ENCODE measurements at regions of chr14 and their contacts with region 1.

Region 1: GRCh38 chr14:100285021-100285912 is 21.0 kb downstream of the SLC25A29 start:
- DNase-seq: peak in 1 of 2 donors; percentile 46
- ATAC-seq: peak; percentile 82 to 88
- H3K4me3 ChIP-seq: peak overlapping the region; percentile 73 to 98 (median 84)
- H3K27ac ChIP-seq: peak overlapping the region; percentile 88 to 98 (median 92)
- H3K4me1 ChIP-seq: peaks cover 31 to 36% of the 10 kb centered on the region in 2 donors
- H3K27me3 ChIP-seq: no peaks in the 10 kb centered on the region
- CTCF ChIP-seq: peak; percentile 68 to 89 (median 80)
- POLR2A ChIP-seq: peak in 1 of 2 donors; percentile 37

Region 2: GRCh38 chr14:100221533-100222223 is 63.6 kb before region 1 on chr14:
- in situ Hi-C with region 1: no loop called
- intact Hi-C with region 1: no loop called
- DNase-seq: no peak
- ATAC-seq: peak in 1 of 2 donors; percentile 39
- H3K4me3 ChIP-seq: peak overlapping the region; percentile 32 to 56 (median 42)
- H3K27ac ChIP-seq: peak overlapping the region in 2 of 4 donors; percentile 8 to 44
- H3K4me1 ChIP-seq: peaks cover 0 to 4% of the 10 kb centered on the region in 2 donors
- H3K27me3 ChIP-seq: no peaks in the 10 kb centered on the region
- CTCF ChIP-seq: no peak
- POLR2A ChIP-seq: no peak

Region 3: GRCh38 chr14:100306420-100307219 is 21.4 kb after region 1 on chr14 and contains the start of gene SLC25A29:
- in situ Hi-C with region 1: no loop called
- intact Hi-C with region 1: loop called (anchors 2 kb)
- DNase-seq: peak; percentile 79 to 89
- ATAC-seq: peak; percentile 83 to 85
- H3K4me3 ChIP-seq: peak within 1 kb of the TSS; percentile 79 to 99 (median 96)
- H3K27ac ChIP-seq: peak within 1 kb of the TSS; percentile 93 to 98 (median 95)
- H3K4me1 ChIP-seq: peaks cover 10 to 27% of the 10 kb centered on the region in 2 donors
- H3K27me3 ChIP-seq: no peaks in the 10 kb centered on the region
- CTCF ChIP-seq: no peak
- POLR2A ChIP-seq: peak; percentile 89 to 94
- total RNA-seq, gene SLC25A29: 9.0 to 17.4 (median 13.4) TPM

Region 4: DNA sequence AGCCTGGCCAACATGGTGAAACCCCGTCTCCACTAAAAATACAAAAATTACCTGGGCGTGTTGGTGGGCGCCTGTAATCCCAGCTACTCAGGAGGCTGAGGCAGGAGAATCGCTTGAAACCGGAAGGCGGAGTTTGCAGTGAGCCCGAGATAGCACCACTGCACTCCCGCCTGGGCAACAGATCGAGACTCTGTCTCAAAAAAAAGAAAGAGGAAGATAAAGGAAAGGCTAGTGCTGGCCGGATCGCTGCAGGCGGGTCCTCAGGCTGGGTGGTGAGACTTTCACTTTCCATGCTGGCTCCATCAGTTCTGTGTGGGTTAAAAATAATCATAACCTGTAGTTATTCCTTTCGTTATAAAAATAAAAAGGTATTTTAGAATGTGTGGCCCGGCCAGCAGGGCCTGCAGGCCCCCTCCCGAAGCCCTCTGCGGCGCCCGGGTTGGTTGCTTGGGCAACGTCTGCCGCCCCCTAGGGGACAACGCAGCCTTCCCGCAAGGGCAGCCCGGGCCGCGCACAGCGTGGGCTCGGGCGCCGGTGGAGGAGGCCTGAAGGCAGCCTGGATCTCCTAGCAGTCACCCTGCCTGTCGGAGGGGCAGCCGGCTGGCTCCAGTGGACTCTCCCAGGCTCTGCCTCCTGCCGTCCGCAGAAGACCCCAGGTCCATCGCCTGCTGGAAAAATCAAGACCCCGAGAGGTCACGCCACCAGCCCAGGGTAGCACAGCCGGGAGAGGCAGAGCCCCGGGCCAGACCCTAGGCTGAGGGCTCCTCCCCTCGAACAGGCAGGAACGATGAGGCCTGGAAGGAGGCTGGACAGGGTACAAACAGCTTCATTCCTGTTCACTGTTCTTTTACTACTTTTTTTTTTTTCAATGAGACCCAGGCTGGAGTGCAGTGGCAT is 32.9 kb after region 1 on chr14:
- in situ Hi-C with region 1: no loop called
- intact Hi-C with region 1: loop called (anchors 1 kb)
- DNase-seq: peak in 1 of 2 donors; percentile 63
- ATAC-seq: peak; percentile 73 to 82
- H3K4me3 ChIP-seq: peak overlapping the region; percentile 44 to 60 (median 50)
- H3K27ac ChIP-seq: peak overlapping the region; percentile 17 to 58 (median 40)
- H3K4me1 ChIP-seq: peaks cover 9 to 11% of the 10 kb centered on the region in 2 donors
- H3K27me3 ChIP-seq: no peaks in the 10 kb centered on the region
- CTCF ChIP-seq: peak; percentile 57 to 94 (median 80)
- POLR2A ChIP-seq: no peak

Region 5: GRCh38 chr14:100332797-100333196 is 47.5 kb after region 1 on chr14:
- in situ Hi-C with region 1: no loop called
- intact Hi-C with region 1: no loop called
- DNase-seq: no peak
- ATAC-seq: no peak
- H3K4me3 ChIP-seq: no peak overlapping the region
- H3K27ac ChIP-seq: no peak overlapping the region
- H3K4me1 ChIP-seq: no peaks in the 10 kb centered on the region
- H3K27me3 ChIP-seq: no peaks in the 10 kb centered on the region
- CTCF ChIP-seq: no peak
- POLR2A ChIP-seq: no peak

Region 6: GRCh38 chr14:100375963-100376735 is 90.9 kb after region 1 on chr14:
- in situ Hi-C with region 1: no loop called
- intact Hi-C with region 1: loop called (anchors 5 kb)
- DNase-seq: peak; percentile 85 to 92
- ATAC-seq: peak; percentile 86 to 90
- H3K4me3 ChIP-seq: peak within 1 kb of the TSS; percentile 73 to 90 (median 85)
- H3K27ac ChIP-seq: peak within 1 kb of the TSS; percentile 80 to 88 (median 86)
- H3K4me1 ChIP-seq: peaks cover 20 to 22% of the 10 kb centered on the region in 2 donors
- H3K27me3 ChIP-seq: no peaks in the 10 kb centered on the region
- CTCF ChIP-seq: no peak
- POLR2A ChIP-seq: peak; percentile 78 to 79

Region 7: GRCh38 chr14:100406505-100407131 is 121.4 kb after region 1 on chr14:
- in situ Hi-C with region 1: no loop called
- intact Hi-C with region 1: no loop called
- DNase-seq: peak in 1 of 2 donors; percentile 33
- ATAC-seq: peak in 1 of 2 donors; percentile 52
- H3K4me3 ChIP-seq: no peak overlapping the region
- H3K27ac ChIP-seq: no peak overlapping the region
- H3K4me1 ChIP-seq: peaks cover 0 to 14% of the 10 kb centered on the region in 2 donors
- H3K27me3 ChIP-seq: no peaks in the 10 kb centered on the region
- CTCF ChIP-seq: no peak
- POLR2A ChIP-seq: no peak